Activated CD8-positive, alpha-beta T cell treated with anti-CD3 and anti-CD28 coated beads, Interleukin-2, amount 10 ng/mL, durations not matched to agents 7 days and 5 days (primary cell): ENCODE measurements at regions of chr1 and their contacts with region 1.

Region 1: GRCh38 chr1:211323156-211324063 is 3.2 kb upstream of the TRAF5 start:
- DNase-seq: peak; percentile 85
- ATAC-seq: peak; percentile 68
- H3K4me3 Mint-ChIP-seq: no peak overlapping the region
- H3K27ac Mint-ChIP-seq: no peak overlapping the region
- H3K4me1 Mint-ChIP-seq: peaks cover 46% of the 10 kb centered on the region
- H3K27me3 Mint-ChIP-seq: no peaks in the 10 kb centered on the region

Region 2: DNA sequence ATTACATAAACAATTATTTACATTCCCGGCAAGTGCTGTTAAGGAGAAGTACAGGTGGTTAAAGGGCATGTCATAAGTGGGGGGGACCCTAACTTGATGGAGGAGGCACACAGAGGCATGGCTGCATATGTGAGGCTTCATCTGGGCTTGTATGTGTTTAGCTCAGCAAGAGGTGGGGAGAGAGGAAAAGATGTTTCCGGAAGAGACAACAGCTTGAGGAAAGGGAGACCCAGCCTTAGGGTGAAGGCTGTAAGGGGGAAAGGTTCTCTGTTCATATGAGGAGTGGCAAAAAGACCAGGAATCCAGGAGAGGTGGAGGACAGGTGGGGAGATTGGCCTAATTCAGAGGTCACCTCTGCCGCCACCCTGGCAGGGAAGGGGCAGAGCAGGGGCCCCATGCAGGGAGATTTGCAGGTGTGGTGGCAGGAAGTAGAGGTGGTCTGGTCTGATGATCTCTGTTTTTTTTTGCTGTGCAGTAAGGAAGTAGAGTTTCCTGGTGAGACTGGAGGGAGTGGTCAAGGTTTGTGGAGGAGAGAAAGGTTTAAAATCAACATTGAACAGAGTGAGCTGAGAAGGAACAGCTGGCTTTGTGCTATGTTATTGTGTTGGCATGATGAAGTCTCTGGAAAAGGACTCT is 12.2 kb after region 1 on chr1:
- CTCF ChIA-PET with region 1: interaction called, 65 read pairs
- POLR2A ChIA-PET with region 1: interaction called, 14 read pairs
- DNase-seq: peak; percentile 59
- ATAC-seq: peak; percentile 84
- H3K4me3 Mint-ChIP-seq: peak overlapping the region; percentile 63
- H3K27ac Mint-ChIP-seq: peak overlapping the region; percentile 89
- H3K4me1 Mint-ChIP-seq: peaks cover 88% of the 10 kb centered on the region
- H3K27me3 Mint-ChIP-seq: no peaks in the 10 kb centered on the region

Region 3: GRCh38 chr1:211356723-211357407 is 33.5 kb after region 1 on chr1:
- CTCF ChIA-PET with region 1: interaction called, 40 read pairs
- POLR2A ChIA-PET with region 1: interaction called, 11 read pairs
- DNase-seq: no peak
- ATAC-seq: no peak
- H3K4me3 Mint-ChIP-seq: no peak overlapping the region
- H3K27ac Mint-ChIP-seq: no peak overlapping the region
- H3K4me1 Mint-ChIP-seq: peaks cover 42% of the 10 kb centered on the region
- H3K27me3 Mint-ChIP-seq: no peaks in the 10 kb centered on the region

Region 4: DNA sequence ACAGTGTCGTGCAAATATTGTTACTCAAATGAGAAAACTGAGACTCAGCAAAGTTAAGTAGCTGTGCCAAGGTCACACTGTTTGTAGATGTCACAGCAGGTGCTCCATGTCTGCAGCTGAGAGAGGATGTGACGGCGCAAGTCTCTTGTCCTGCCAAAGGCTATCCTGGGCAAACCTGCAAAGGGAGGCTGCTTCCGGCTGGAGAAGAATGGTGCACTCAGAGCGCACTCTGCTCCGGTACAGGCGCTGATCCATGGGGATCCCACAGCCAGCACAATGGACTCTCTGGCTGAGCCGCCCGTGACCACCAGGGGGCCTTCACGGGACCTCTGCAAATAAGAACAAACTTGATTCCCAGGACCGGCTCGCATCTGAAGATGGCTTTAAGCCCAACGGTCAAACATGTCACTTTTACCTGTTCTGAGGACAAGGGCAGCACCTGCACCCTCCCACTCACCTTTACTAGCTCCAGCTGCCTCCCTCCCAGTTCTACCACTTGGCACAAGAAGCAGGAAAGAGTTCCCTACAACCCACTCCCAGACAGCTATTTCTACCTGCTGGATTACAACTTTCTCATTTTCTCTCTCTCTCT is 146.6 kb after region 1 on chr1:
- CTCF ChIA-PET with region 1: interaction called, 24 read pairs
- POLR2A ChIA-PET with region 1: no interaction called
- DNase-seq: peak; percentile 44
- ATAC-seq: peak; percentile 44
- H3K4me3 Mint-ChIP-seq: no peak overlapping the region
- H3K27ac Mint-ChIP-seq: no peak overlapping the region
- H3K4me1 Mint-ChIP-seq: no peaks in the 10 kb centered on the region
- H3K27me3 Mint-ChIP-seq: peaks cover 27% of the 10 kb centered on the region

Region 5: GRCh38 chr1:211501711-211502400 is 178.4 kb after region 1 on chr1:
- CTCF ChIA-PET with region 1: interaction called, 10 read pairs
- POLR2A ChIA-PET with region 1: no interaction called
- DNase-seq: no peak
- ATAC-seq: no peak
- H3K4me3 Mint-ChIP-seq: no peak overlapping the region
- H3K27ac Mint-ChIP-seq: no peak overlapping the region
- H3K4me1 Mint-ChIP-seq: no peaks in the 10 kb centered on the region
- H3K27me3 Mint-ChIP-seq: peaks cover 16% of the 10 kb centered on the region